ENCODE measurements at regions of chr4 and their contacts with region 1.

Region 1: GRCh38 chr4:81069706-81070331 is 39.3 kb downstream of the BMP3 start:
- DNase-seq: peak; percentile 89
- H3K4me3 ChIP-seq: no peak overlapping the region
- CTCF ChIP-seq: peak; percentile 93

Region 2: DNA sequence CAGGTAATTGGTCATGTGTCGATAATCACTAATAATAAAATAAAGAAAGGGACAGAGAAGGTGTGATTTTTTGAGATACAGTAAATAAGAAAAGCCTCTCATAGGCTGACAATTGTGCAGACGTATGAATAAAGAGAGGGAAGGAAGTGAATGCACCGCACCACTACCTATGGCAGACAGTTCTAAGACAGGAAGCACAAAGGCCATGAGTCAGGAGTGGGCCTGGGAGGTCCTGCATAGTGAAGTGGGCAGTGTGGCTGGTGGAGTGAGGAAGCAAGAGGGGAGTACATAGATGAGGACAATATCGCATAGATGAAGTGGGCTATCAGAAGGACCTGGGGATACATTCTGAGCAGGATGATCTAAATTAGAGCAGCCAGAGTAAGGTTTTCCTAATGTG is 36.3 kb after region 1 on chr4:
- in situ Hi-C with region 1: no loop called
- DNase-seq: no peak
- H3K4me3 ChIP-seq: no peak overlapping the region
- CTCF ChIP-seq: no peak

Region 3: DNA sequence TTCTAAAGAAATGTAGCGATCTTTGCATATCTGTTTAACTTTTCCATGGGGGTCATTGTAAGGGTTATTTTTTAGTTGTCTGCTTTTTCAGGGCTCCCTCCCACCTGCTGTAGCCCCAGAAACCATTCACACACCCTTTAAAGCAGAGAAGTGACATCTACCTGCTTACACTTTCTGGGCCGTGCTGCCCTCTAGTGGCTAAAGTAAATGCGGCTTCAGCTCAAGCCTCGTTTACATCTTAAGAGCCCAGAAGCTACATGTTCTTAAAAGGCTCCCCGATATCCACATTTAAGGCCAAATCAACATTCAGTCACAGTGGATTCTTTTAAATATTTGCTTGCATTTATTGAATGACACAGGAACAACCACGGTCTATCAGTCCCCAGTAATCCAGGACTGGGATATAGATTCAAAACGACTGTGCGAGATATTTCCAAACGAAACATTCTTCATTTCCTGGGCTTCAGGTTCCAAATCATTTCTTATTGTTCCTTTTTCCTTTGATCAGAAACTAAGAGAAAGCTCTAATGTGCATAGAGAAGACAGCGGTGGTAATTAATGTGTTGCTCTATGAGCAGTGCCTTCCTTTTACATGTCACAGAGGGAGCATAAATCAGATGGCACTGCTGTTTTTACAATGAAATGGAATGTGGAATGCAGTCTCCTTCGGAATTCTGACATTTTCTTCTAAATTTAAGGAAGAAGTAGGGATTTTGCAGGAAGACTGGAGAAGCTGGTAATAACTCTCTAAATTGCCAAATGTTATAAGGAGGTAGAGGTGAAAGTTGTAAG is 282.0 kb after region 1 on chr4:
- in situ Hi-C with region 1: loop called (anchors 25 kb)
- DNase-seq: peak; percentile 77
- H3K4me3 ChIP-seq: no peak overlapping the region
- CTCF ChIP-seq: peak; percentile 93